Activated CD4-positive, alpha-beta memory T cell treated with anti-CD3 and anti-CD28 coated beads, Interleukin-2, amount 10 ng/mL, durations not matched to agents 7 days and 5 days (primary cell): ENCODE measurements at regions of chr7 and their contacts with region 1.

Region 1: DNA sequence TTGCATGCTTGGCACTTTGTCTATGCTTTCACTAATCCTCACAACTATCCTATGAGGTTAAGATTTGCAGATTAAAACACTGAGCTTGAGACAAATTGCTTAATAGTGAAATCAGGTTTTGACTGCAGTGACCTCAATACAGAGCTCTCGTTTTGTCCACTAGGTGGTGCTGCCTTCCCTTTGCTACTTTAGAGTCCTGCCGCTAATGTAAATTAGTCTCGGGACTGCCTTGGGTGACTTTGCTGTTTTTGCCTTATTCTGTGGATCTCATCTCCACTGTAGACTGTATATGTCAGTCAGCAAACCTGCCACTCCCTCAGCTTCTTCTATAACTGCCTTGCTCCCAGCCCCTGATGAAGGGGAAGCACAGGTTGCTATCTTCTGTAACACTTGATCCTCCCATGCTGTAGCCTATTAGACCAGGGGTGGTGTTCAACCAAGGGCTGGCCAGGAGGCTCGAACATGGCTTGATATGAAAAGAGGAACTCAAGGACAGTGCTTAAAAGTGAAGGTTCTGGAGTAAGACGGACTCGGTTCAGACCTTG is 26.0 kb downstream of the ASB4 start:
- DNase-seq: peak; percentile 62
- H3K4me3 Mint-ChIP-seq: no peak overlapping the region
- H3K27ac Mint-ChIP-seq: no peak overlapping the region
- H3K4me1 Mint-ChIP-seq: no peaks in the 10 kb centered on the region
- H3K27me3 Mint-ChIP-seq: peaks cover 30% of the 10 kb centered on the region

Region 2: DNA sequence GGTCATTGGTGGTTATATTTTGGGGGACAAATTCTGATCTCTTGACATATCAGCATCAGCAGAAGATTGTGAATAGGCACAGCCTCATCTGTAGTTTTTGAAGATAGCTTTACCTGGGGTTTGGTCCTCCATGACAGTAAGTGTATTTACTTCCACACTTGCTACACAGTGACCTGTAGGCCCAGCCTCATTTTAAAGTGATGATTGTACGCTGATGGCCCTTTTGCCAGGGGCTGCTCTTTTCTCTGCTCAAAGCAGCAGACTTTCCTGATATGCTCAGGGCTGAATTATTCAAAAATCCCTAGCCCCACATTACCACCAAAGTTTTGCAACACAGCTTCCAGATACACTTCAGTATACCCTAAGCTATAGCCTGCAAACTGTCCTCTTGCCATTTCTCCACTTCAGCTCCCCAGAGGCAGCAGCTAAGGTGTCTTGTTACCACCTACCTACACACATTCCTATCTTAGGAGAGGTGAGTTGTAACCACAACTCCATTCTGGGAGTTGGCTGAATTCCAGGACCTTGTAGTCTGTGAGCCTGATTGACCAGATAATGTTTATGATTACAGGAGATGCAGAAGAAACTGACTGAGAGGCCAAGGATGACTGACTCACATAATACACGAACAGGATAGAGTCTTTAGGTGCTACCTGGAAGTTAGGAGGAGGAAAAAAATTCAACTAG is 20.0 kb before region 1 on chr7:
- CTCF ChIA-PET with region 1: interaction called, 15 read pairs
- POLR2A ChIA-PET with region 1: no interaction called
- DNase-seq: no peak
- H3K4me3 Mint-ChIP-seq: no peak overlapping the region
- H3K27ac Mint-ChIP-seq: no peak overlapping the region
- H3K4me1 Mint-ChIP-seq: no peaks in the 10 kb centered on the region
- H3K27me3 Mint-ChIP-seq: peaks cover 20% of the 10 kb centered on the region

Region 3: GRCh38 chr7:95501261-95501832 is 10.4 kb before region 1 on chr7:
- CTCF ChIA-PET with region 1: interaction called, 30 read pairs
- POLR2A ChIA-PET with region 1: interaction called, 3 read pairs
- DNase-seq: peak; percentile 36
- H3K4me3 Mint-ChIP-seq: peak overlapping the region; percentile 26
- H3K27ac Mint-ChIP-seq: peak overlapping the region; percentile 64
- H3K4me1 Mint-ChIP-seq: peaks cover 33% of the 10 kb centered on the region
- H3K27me3 Mint-ChIP-seq: peaks cover 5% of the 10 kb centered on the region

Region 4: GRCh38 chr7:95527033-95527775 is 15.4 kb after region 1 on chr7:
- CTCF ChIA-PET with region 1: interaction called, 13 read pairs
- POLR2A ChIA-PET with region 1: no interaction called
- DNase-seq: peak; percentile 18
- H3K4me3 Mint-ChIP-seq: no peak overlapping the region
- H3K27ac Mint-ChIP-seq: no peak overlapping the region
- H3K4me1 Mint-ChIP-seq: no peaks in the 10 kb centered on the region
- H3K27me3 Mint-ChIP-seq: peaks cover 18% of the 10 kb centered on the region

Region 5: GRCh38 chr7:95690367-95690947 is 178.7 kb after region 1 on chr7:
- CTCF ChIA-PET with region 1: interaction called, 113 read pairs
- POLR2A ChIA-PET with region 1: no interaction called
- DNase-seq: no peak
- H3K4me3 Mint-ChIP-seq: no peak overlapping the region
- H3K27ac Mint-ChIP-seq: no peak overlapping the region
- H3K4me1 Mint-ChIP-seq: no peaks in the 10 kb centered on the region
- H3K27me3 Mint-ChIP-seq: peaks cover 3% of the 10 kb centered on the region